ENCODE measurements at regions of chr11 and their contacts with region 1.

Region 1: DNA sequence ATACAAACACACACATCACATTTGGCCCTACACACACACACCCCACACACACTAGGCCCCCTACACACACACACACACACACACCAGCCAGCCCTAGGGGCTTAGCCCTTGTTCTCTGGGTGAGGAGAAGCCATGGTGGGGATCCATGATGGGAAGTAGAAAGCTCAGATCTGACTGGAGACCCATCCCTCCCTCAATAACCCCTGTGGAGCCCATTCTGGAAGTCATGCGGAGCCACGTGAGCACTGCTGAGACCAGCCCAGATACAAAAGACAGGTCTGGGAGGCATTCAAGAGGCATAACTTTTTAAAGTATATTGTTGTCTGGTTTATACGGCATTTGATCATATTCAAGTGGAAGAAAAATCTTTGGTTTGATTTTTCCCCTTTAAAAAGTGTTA is 448.5 kb downstream of the SOX6 start:
- DNase-seq: no peak
- ATAC-seq: no peak
- H3K4me3 ChIP-seq: no peak overlapping the region
- H3K27ac ChIP-seq: no peak overlapping the region
- H3K4me1 ChIP-seq: no peaks in the 10 kb centered on the region
- H3K27me3 ChIP-seq: no peaks in the 10 kb centered on the region
- CTCF ChIP-seq: no peak

Region 2: DNA sequence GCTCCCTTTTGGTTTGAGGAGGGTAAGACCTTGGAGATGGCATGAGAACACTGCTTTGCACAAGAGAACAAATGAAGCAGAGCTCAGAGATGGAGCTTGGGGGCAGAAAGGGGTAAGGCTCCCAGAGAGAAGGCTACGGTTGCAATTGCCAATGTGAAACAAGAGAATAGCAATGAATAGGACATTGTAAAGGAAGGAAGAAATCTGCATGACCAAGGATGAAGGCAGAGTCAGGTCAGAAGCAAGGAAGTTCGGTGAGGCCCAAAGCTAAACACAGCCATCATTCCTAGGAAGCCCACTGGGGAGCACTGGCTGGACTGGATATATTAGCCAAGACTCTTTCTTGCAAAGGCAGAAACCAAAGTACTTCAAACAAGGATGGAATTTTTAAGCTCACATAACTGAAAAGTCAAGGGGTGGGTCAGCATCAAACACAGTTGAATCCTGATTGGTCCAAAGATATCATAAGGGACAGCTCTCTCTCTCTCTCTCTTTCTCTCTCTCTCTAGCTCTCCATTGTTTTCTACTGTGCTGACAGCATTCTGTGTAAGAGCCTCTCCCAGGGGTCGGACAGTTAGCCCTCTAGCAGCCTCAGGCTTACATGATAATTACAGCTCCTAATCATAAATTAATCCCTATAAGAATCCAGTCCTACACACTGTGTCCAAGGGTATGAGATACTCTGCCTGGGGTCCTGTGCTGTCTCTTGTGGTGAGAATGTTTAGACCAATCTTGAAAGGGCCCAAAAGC is 35.7 kb before region 1 on chr11:
- CTCF ChIA-PET with region 1: no interaction called
- POLR2A ChIA-PET with region 1: no interaction called
- in situ Hi-C with region 1: no loop called
- intact Hi-C with region 1: no loop called
- DNase-seq: no peak
- ATAC-seq: no peak
- H3K4me3 ChIP-seq: no peak overlapping the region
- H3K27ac ChIP-seq: no peak overlapping the region
- H3K4me1 ChIP-seq: no peaks in the 10 kb centered on the region
- H3K27me3 ChIP-seq: no peaks in the 10 kb centered on the region
- CTCF ChIP-seq: no peak

Region 3: GRCh38 chr11:16759857-16760256 is 852.1 kb after region 1 on chr11:
- CTCF ChIA-PET with region 1: no interaction called
- POLR2A ChIA-PET with region 1: interaction called, 10 read pairs
- in situ Hi-C with region 1: no loop called
- intact Hi-C with region 1: no loop called
- DNase-seq: no peak
- ATAC-seq: no peak
- H3K4me3 ChIP-seq: no peak overlapping the region
- H3K27ac ChIP-seq: no peak overlapping the region
- H3K4me1 ChIP-seq: no peaks in the 10 kb centered on the region
- H3K27me3 ChIP-seq: no peaks in the 10 kb centered on the region
- CTCF ChIP-seq: no peak

Measured in Panc1 (cell line).